Sigmoid colon (tissue), 7 donors: ENCODE measurements at regions of chr10 and their contacts with region 1.

Region 1: DNA sequence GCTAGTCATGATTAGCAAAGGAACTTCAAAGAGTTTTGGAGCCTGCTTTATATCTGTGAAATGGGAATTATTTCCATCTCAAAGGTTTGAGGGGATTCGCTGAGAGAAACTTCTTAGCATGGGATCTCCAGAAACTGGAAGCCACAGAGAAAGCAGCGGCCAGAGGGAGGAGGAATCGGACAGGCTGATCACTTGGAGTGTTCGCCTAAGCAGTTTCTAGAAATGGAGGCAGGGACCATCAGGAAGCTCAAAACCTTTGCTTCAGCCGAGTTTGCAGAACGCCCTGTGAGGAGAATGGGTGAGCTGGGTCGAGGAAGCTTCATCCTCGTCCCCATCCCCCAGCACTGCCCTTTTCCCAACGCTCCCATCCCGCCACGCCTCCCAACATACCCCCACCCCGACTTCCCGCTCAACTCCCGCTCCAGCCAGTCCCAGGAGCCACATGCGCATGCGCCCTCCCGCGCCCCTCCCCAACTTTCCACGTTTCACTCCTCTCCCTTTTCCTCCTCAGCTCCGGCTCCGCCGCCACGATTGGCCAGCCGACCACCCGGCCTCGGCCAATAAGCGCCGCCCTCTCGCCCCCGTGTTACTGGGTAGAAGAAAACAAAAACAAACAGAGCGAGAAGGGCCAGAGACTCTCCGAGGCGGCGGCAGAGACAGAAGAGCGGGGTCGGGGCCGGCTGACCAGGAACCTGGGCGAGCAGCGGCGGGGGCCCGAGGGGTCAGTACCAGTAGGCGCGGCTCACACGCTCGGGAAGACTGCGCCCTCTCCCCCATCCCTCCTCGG is at the start of gene PDCD4:
- DNase-seq: peak; percentile 100
- H3K4me3 ChIP-seq: peak within 1 kb of the TSS; percentile 82 to 99 (median 98)
- H3K27ac ChIP-seq: peak within 1 kb of the TSS; percentile 97 to 99 (median 98)
- H3K4me1 ChIP-seq: peaks cover 0 to 32% (median 22%) of the 10 kb centered on the region in 4 donors
- H3K27me3 ChIP-seq: no peaks in the 10 kb centered on the region
- CTCF ChIP-seq: no peak
- EP300 ChIP-seq: no peak
- POLR2A ChIP-seq: peak; percentile 81 to 92
- total RNA-seq, gene PDCD4: 64.3 to 140 (median 127) TPM

Region 2: DNA sequence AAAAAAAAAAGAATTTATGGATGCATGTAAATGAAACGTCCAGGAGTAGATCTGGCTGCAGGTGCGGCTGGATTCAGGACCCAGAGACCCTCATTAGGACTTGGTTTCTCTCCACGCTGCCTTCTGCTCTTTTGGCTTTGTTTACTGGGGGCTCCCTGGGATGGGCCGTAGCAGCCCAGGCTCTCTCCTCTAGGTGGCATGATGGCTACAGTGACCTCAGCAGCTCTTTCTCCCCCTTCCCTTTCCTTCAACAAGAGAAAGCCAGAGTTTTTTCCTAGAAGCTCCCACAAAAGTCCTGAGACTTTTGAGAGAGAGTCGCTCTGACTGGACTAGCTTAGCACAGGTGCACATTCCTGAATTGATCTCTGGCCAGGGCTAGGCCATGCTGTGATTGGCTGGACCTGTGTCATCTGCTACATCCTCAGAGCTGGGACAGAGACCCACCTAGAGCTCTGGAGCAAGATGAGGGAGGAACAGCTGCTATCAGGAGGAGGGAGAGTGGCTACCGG is 67.6 kb before region 1 on chr10:
- intact Hi-C with region 1: loop called (anchors 5 kb)
- DNase-seq: no peak
- H3K4me3 ChIP-seq: no peak overlapping the region
- H3K27ac ChIP-seq: peak overlapping the region; percentile 16 to 80 (median 70)
- H3K4me1 ChIP-seq: peaks cover 0 to 39% (median 38%) of the 10 kb centered on the region in 4 donors
- H3K27me3 ChIP-seq: no peaks in the 10 kb centered on the region
- CTCF ChIP-seq: peak; percentile 42 to 67 (median 50)
- EP300 ChIP-seq: no peak
- POLR2A ChIP-seq: no peak

Region 3: GRCh38 chr10:110820321-110820814 is 51.1 kb before region 1 on chr10:
- intact Hi-C with region 1: loop called (anchors 2 kb)
- DNase-seq: peak; percentile 95
- H3K4me3 ChIP-seq: no peak overlapping the region
- H3K27ac ChIP-seq: peak overlapping the region; percentile 79 to 90 (median 85)
- H3K4me1 ChIP-seq: peaks cover 0 to 84% (median 81%) of the 10 kb centered on the region in 4 donors
- H3K27me3 ChIP-seq: no peaks in the 10 kb centered on the region
- CTCF ChIP-seq: no peak
- EP300 ChIP-seq: peak; percentile 15 to 81 (median 50)
- POLR2A ChIP-seq: no peak

Region 4: DNA sequence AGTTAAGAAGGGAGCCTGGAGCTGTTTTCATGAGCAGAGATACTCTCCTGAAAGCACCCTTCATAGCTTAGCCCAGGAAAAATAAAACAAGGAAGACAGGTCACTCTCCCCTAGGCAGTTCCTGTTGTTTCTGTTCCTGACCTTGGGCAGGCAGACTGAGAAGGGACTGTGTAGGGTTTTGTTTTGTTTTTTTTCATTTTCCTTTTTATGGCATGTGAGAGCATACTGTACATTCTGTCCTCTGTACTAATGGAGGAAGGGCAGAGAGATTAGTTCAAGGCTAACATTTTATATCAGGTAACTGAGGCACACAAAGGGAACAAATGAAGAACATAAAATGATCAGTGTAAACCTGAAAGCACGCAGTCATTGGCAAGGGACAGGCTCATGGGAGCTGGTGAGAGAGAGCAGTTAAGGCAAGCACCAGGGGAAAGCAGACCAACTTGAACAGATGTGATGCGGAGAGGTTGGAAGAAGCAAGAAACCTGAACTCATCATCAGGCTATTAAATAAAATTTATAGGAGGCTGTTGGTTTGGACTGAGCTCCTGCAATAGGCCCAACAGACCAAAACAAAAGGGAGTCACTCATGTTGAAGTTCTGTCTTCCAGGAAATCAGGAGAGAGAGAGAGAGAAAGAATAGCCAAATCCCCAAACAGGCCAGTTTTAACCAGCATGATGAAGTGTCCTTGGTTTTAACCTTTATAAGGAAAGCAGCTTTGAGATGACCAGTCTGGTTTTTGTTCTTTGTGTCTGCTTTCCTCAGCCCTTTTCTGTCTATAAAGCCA is 33.9 kb before region 1 on chr10:
- intact Hi-C with region 1: loop called (anchors 2 kb)
- DNase-seq: peak; percentile 82
- H3K4me3 ChIP-seq: peak overlapping the region in 1 of 4 donors; percentile 5
- H3K27ac ChIP-seq: peak overlapping the region; percentile 68 to 95 (median 82)
- H3K4me1 ChIP-seq: peaks cover 2 to 61% (median 57%) of the 10 kb centered on the region in 4 donors
- H3K27me3 ChIP-seq: no peaks in the 10 kb centered on the region
- CTCF ChIP-seq: no peak
- EP300 ChIP-seq: peak; percentile 79 to 98 (median 92)
- POLR2A ChIP-seq: no peak

Region 5: GRCh38 chr10:110923856-110924493 is 52.5 kb after region 1 on chr10:
- intact Hi-C with region 1: no loop called
- DNase-seq: no peak
- H3K4me3 ChIP-seq: no peak overlapping the region
- H3K27ac ChIP-seq: no peak overlapping the region
- H3K4me1 ChIP-seq: peaks cover 0 to 51% (median 41%) of the 10 kb centered on the region in 4 donors
- H3K27me3 ChIP-seq: no peaks in the 10 kb centered on the region
- CTCF ChIP-seq: no peak
- EP300 ChIP-seq: no peak
- POLR2A ChIP-seq: no peak